Caco-2 (cell line): ENCODE measurements at regions of chr14 and their contacts with region 1.

Region 1: DNA sequence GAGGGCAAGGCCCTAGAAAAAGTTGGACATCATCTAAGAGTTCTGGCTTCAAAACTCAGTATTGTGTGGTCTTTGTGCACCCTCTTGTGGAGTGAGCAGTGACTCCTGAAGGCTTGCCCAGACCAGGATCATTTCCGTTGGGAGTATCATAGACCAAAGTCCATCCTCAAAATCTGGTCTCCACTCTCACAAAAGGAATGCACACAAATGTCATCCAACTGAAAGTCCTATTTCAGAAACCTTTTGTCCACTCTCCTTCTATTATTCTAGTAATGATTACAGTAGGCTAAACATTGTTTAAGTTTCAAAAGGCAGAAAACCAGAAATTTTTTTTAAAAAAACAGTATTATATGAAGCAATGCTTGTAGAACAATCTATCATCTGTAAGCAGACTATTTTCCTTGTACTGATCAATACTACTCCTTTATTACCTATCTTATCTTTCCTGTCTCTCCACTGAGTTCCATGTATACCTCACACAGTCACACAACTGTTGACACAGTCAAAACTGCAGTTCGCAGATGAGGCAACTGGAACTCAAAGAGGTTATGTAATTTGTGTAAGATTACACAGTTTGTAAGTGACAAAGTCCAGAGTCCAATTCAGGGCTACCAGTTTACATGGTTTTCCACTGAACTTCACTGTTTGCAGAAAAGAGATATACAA is 41.4 kb downstream of the COX16 start:
- DNase-seq: peak; percentile 83 to 86
- H3K4me3 ChIP-seq: no peak overlapping the region
- H3K4me3 Mint-ChIP-seq: no peak overlapping the region
- H3K27ac Mint-ChIP-seq: peak overlapping the region; percentile 87
- H3K4me1 ChIP-seq: peaks cover 33% of the 10 kb centered on the region
- H3K4me1 Mint-ChIP-seq: peaks cover 18% of the 10 kb centered on the region
- H3K27me3 ChIP-seq: no peaks in the 10 kb centered on the region
- H3K27me3 Mint-ChIP-seq: no peaks in the 10 kb centered on the region
- CTCF ChIP-seq: peak; percentile 58 to 77

Region 2: DNA sequence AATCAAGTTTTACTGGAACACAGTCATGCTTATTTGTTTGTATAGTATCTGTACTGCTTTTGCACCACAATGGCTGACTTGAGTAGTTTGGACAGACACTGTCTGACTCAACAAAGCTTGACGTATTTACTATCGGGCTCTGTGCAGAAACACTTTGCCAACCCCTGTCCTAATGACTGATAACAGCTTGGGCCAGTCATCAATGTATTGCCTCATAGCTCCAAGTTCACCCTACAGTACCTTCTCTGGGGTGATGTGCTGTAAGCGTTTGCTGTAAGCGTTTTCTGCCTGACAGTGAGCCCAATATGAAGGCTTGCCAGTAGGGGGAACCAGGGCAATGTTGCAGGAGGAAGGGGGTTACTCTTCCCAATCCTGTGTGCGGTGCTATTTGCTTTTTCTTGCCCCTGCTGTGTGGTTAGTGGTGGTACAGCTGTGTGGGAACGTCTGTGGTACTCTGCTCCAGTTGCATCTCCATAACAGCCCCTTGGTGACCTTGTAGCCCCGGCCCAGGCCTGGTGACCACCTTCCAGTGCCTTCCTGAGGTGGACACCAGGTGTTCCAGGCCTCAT is 738.0 kb before region 1 on chr14:
- CTCF ChIA-PET with region 1: no interaction called
- POLR2A ChIA-PET with region 1: no interaction called
- intact Hi-C with region 1: loop called (anchors 5 kb)
- DNase-seq: peak; percentile 71 to 73
- H3K4me3 ChIP-seq: no peak overlapping the region
- H3K4me3 Mint-ChIP-seq: no peak overlapping the region
- H3K27ac Mint-ChIP-seq: no peak overlapping the region
- H3K4me1 ChIP-seq: no peaks in the 10 kb centered on the region; the same call in 1 of the 2 replicates
- H3K4me1 Mint-ChIP-seq: peaks cover 16% of the 10 kb centered on the region
- H3K27me3 ChIP-seq: no peaks in the 10 kb centered on the region
- H3K27me3 Mint-ChIP-seq: no peaks in the 10 kb centered on the region
- CTCF ChIP-seq: peak; percentile 37 to 77

Region 3: DNA sequence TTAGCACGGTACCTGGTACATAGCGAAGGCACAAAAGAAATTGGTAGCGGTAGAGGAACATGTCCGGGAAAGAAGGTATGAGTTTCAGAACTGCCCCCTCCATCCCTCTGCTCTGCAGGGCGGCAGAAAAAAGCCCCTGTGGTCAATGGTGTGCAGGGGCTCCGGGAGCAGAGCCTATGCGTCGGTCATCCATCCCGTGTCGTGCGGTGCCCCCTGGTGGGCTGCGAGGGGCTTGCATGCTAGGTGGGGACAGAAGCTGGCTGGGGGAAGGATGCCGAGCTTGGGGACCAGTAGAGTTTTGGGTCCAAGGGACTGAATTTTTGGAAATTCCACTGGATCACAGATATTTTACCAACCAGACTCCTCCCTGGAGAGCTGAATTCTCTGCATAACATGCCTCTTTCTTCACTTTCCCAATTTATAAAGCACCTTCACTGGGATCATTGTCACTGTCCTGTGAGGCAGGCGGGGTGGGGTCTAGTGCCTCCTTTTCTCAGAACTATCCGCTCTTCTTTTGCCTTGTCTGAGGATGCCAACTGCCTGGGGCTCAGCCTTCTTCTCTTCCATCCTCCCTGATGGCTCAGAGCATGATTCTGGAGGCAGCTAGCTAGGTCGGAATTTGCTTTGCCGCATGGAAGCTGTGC is 290.2 kb before region 1 on chr14:
- CTCF ChIA-PET with region 1: no interaction called
- POLR2A ChIA-PET with region 1: no interaction called
- intact Hi-C with region 1: loop called (anchors 1 kb)
- DNase-seq: peak; percentile 76 to 90
- H3K4me3 ChIP-seq: no peak overlapping the region
- H3K4me3 Mint-ChIP-seq: no peak overlapping the region
- H3K27ac Mint-ChIP-seq: no peak overlapping the region
- H3K4me1 ChIP-seq: peaks cover 11% of the 10 kb centered on the region
- H3K4me1 Mint-ChIP-seq: peaks cover 10% of the 10 kb centered on the region
- H3K27me3 ChIP-seq: no peaks in the 10 kb centered on the region
- H3K27me3 Mint-ChIP-seq: no peaks in the 10 kb centered on the region
- CTCF ChIP-seq: peak; percentile 95 to 96

Region 4: DNA sequence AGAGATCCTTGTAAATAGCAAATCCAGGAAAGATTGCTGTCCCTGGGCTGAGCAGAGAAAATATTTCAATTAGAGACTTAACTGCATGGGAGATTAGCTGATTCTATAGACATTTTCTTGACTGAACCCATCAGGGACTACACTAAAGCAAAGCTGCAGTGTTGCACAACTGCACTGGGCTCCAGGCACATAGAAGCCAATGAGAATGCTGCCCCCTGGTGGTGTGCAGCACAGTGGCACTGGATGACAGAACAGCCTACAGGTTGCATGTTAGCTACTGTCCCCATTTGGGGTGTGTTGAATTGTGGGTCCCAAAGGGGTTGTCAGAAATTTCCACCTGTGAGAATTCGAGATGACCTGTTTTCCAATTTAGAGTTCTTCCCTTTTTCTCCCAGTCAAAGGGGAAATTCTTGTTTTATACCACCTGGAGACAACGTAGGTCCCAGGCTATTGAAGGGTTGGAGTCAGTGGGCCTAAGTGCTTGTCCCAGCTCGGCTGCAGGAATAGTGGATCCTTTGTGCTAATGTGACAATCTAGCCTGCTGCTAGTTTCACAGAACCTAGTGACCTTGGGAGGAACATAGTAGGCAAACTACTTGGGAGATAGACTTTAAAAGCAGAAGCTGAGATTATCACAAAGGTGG is 244.1 kb before region 1 on chr14:
- CTCF ChIA-PET with region 1: no interaction called
- POLR2A ChIA-PET with region 1: no interaction called
- intact Hi-C with region 1: loop called (anchors 5 kb)
- DNase-seq: peak; percentile 82 to 87
- H3K4me3 ChIP-seq: no peak overlapping the region
- H3K4me3 Mint-ChIP-seq: no peak overlapping the region
- H3K27ac Mint-ChIP-seq: no peak overlapping the region
- H3K4me1 ChIP-seq: peaks cover 13% of the 10 kb centered on the region
- H3K4me1 Mint-ChIP-seq: peaks cover 18% of the 10 kb centered on the region
- H3K27me3 ChIP-seq: no peaks in the 10 kb centered on the region
- H3K27me3 Mint-ChIP-seq: no peaks in the 10 kb centered on the region
- CTCF ChIP-seq: peak; percentile 88 to 96

Region 5: DNA sequence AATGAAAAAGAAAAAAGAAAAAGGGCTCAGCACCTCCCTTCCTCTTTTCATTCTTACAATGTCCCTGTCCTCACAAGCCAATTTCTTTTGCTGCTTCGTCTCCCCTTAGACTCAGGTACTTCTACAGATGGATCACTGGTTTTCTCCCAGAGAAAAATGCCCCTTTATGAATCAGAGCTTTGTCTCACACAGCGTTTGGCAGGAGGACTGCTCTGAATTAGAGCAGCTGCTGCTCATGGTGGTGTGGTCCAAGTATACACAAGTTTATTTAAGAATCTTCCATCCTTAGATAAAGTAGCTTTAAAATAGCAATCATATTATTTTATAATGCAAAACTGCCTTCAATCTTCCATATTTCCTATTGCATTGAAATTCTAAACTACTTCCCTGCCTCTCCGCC is 209.7 kb before region 1 on chr14:
- CTCF ChIA-PET with region 1: no interaction called
- POLR2A ChIA-PET with region 1: no interaction called
- intact Hi-C with region 1: no loop called
- DNase-seq: no peak
- H3K4me3 ChIP-seq: no peak overlapping the region
- H3K4me3 Mint-ChIP-seq: no peak overlapping the region
- H3K27ac Mint-ChIP-seq: no peak overlapping the region
- H3K4me1 ChIP-seq: no peaks in the 10 kb centered on the region
- H3K4me1 Mint-ChIP-seq: no peaks in the 10 kb centered on the region
- H3K27me3 ChIP-seq: no peaks in the 10 kb centered on the region
- H3K27me3 Mint-ChIP-seq: peaks cover 32% of the 10 kb centered on the region
- CTCF ChIP-seq: no peak

Region 6: GRCh38 chr14:70254476-70254961 is 63.6 kb before region 1 on chr14:
- CTCF ChIA-PET with region 1: no interaction called
- POLR2A ChIA-PET with region 1: no interaction called
- intact Hi-C with region 1: loop called (anchors 1 kb)
- DNase-seq: peak; percentile 71 to 72
- H3K4me3 ChIP-seq: peak overlapping the region; percentile 75
- H3K4me3 Mint-ChIP-seq: peak overlapping the region; percentile 72
- H3K27ac Mint-ChIP-seq: no peak overlapping the region
- H3K4me1 ChIP-seq: no peaks in the 10 kb centered on the region
- H3K4me1 Mint-ChIP-seq: no peaks in the 10 kb centered on the region
- H3K27me3 ChIP-seq: no peaks in the 10 kb centered on the region
- H3K27me3 Mint-ChIP-seq: peaks cover 10% of the 10 kb centered on the region
- CTCF ChIP-seq: no peak

Region 7: GRCh38 chr14:70398706-70399431 is 80.8 kb after region 1 on chr14:
- CTCF ChIA-PET with region 1: no interaction called
- POLR2A ChIA-PET with region 1: no interaction called
- intact Hi-C with region 1: loop called (anchors 1 kb)
- DNase-seq: no peak
- H3K4me3 ChIP-seq: no peak overlapping the region
- H3K4me3 Mint-ChIP-seq: no peak overlapping the region
- H3K27ac Mint-ChIP-seq: no peak overlapping the region
- H3K4me1 ChIP-seq: peaks cover 21% of the 10 kb centered on the region; the same call in 1 of the 2 replicates
- H3K4me1 Mint-ChIP-seq: peaks cover 17% of the 10 kb centered on the region
- H3K27me3 ChIP-seq: no peaks in the 10 kb centered on the region
- H3K27me3 Mint-ChIP-seq: no peaks in the 10 kb centered on the region
- CTCF ChIP-seq: no peak